ENCODE measurements at regions of chr4 and their contacts with region 1.

Region 1: DNA sequence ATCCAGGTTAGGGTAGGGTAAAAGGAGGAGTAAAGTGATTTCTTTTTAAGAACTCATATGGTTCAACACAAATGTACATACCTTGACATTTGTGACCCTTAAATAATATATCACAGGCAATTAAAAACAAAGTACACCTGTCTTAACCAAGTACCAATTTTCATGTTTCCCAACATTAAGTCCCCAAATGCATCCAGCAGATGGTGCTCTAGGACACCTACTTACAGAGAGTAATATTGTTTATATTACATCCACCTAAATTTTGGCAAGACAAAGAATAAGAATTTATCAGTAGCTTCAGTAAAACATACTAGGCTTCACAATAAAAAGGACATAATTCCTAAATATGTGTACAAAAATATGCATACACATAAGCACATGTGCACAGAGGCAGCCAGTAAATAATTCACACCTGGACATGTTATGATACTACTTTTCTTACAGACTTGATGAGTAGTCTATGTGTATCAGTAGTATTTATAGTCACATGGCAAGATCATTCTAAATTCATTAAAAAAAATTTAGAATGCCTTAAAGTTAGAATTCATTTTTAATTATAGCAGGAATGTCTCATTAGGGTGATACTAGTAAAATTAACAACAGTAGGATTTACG is 219.7 kb downstream of the DCLK2 start:
- DNase-seq: peak in 1 of 2 donors; percentile 27
- ATAC-seq: peak in 2 of 8 donors; percentile 37 to 49
- H3K4me3 ChIP-seq: no peak overlapping the region
- H3K27ac ChIP-seq: no peak overlapping the region
- H3K4me1 ChIP-seq: peaks cover 0 to 10% (median 0%) of the 10 kb centered on the region in 9 donors
- H3K27me3 ChIP-seq: no peaks in the 10 kb centered on the region
- CTCF ChIP-seq: peak; percentile 30 to 78 (median 70)

Region 2: DNA sequence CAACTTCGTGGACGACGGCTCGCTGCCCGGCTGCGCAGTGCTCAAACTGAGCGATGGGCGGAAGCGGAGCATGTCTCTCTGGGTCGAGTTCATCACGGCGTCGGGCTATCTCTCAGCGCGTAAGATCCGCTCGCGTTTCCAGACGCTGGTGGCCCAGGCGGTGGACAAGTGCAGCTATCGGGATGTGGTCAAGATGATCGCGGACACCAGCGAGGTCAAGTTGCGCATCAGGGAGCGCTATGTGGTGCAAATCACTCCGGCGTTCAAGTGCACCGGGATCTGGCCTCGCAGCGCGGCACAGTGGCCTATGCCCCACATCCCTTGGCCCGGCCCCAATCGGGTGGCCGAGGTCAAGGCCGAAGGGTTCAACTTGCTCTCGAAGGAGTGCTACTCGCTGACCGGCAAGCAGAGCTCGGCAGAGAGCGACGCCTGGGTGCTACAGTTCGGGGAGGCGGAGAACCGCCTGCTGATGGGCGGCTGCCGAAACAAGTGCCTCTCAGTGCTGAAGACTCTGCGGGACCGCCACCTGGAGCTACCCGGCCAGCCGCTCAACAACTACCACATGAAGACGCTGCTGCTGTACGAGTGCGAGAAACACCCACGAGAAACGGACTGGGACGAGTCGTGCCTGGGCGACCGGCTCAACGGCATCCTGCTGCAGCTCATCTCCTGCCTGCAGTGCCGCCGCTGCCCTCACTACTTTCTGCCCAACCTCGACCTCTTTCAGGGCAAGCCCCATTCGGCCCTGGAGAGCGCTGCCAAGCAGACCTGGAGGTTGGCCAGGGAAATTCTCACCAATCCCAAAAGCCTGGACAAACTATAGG is 285.5 kb after region 1 on chr4:
- intact Hi-C with region 1: loop called in 1 of 10 experiments (anchors 10 kb)
- DNase-seq: peak; percentile 15 to 25
- ATAC-seq: peak; percentile 31 to 87 (median 66)
- H3K4me3 ChIP-seq: peak overlapping the region; percentile 22 to 54 (median 48)
- H3K27ac ChIP-seq: no peak overlapping the region
- H3K4me1 ChIP-seq: peaks cover 0 to 10% (median 0%) of the 10 kb centered on the region in 9 donors
- H3K27me3 ChIP-seq: peaks cover 0 to 52% (median 0%) of the 10 kb centered on the region in 7 donors
- CTCF ChIP-seq: peak in 1 of 9 donors; percentile 8

Region 3: DNA sequence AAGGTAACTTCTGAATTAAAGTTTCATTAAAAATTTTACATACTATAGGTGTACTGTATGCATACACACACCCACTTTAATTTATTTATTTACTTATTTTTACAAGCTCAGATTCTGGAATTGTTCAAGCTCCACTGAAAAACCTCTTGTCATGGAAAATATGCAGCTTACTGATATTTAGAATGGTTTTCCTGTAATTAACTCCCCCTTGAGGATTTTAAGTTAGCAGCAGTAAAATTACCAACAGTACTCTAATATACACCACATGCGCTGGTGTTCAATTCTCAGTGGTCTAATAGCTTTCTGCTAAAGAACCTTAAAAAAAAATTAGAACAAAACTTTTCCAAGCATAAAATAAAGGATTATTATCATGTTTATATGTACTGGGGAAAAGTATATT is 296.0 kb after region 1 on chr4:
- intact Hi-C with region 1: loop called in 2 of 10 experiments (anchors 10 kb)
- DNase-seq: no peak
- ATAC-seq: no peak
- H3K4me3 ChIP-seq: no peak overlapping the region
- H3K27ac ChIP-seq: no peak overlapping the region
- H3K4me1 ChIP-seq: no peaks in the 10 kb centered on the region
- H3K27me3 ChIP-seq: no peaks in the 10 kb centered on the region
- CTCF ChIP-seq: peak in 4 of 9 donors; percentile 20 to 24 (median 22)

Region 4: GRCh38 chr4:150852216-150852615 is 554.2 kb after region 1 on chr4:
- intact Hi-C with region 1: loop called in 1 of 10 experiments (anchors 10 kb)
- DNase-seq: no peak
- ATAC-seq: peak in 2 of 8 donors; percentile 16 to 43
- H3K4me3 ChIP-seq: no peak overlapping the region
- H3K27ac ChIP-seq: no peak overlapping the region
- H3K4me1 ChIP-seq: peaks cover 0 to 13% (median 0%) of the 10 kb centered on the region in 9 donors
- H3K27me3 ChIP-seq: no peaks in the 10 kb centered on the region
- CTCF ChIP-seq: no peak

Region 5: GRCh38 chr4:150867148-150867547 is 569.2 kb after region 1 on chr4:
- intact Hi-C with region 1: loop called (anchors 1 to 10 kb)
- DNase-seq: peak in 1 of 2 donors; percentile 59
- ATAC-seq: peak in 7 of 8 donors; percentile 55 to 82 (median 72)
- H3K4me3 ChIP-seq: no peak overlapping the region
- H3K27ac ChIP-seq: no peak overlapping the region
- H3K4me1 ChIP-seq: peaks cover 0 to 4% (median 0%) of the 10 kb centered on the region in 9 donors
- H3K27me3 ChIP-seq: no peaks in the 10 kb centered on the region
- CTCF ChIP-seq: peak; percentile 55 to 78 (median 69)

Region 6: GRCh38 chr4:150874338-150875226 is 576.6 kb after region 1 on chr4:
- intact Hi-C with region 1: loop called in 7 of 10 experiments (anchors 2 to 10 kb)
- DNase-seq: peak; percentile 55 to 70
- ATAC-seq: peak; percentile 93 to 99 (median 98)
- H3K4me3 ChIP-seq: peak overlapping the region in 3 of 10 donors; percentile 8 to 15 (median 9)
- H3K27ac ChIP-seq: peak overlapping the region in 9 of 10 donors; percentile 10 to 80 (median 56)
- H3K4me1 ChIP-seq: peaks cover 0 to 13% (median 5%) of the 10 kb centered on the region in 9 donors
- H3K27me3 ChIP-seq: no peaks in the 10 kb centered on the region
- CTCF ChIP-seq: no peak

Region 7: GRCh38 chr4:150950657-150951288 is 652.8 kb after region 1 on chr4:
- intact Hi-C with region 1: loop called in 1 of 10 experiments (anchors 5 kb)
- DNase-seq: no peak
- ATAC-seq: peak in 5 of 8 donors; percentile 65 to 76 (median 70)
- H3K4me3 ChIP-seq: no peak overlapping the region
- H3K27ac ChIP-seq: no peak overlapping the region
- H3K4me1 ChIP-seq: peaks cover 0 to 26% (median 11%) of the 10 kb centered on the region in 9 donors
- H3K27me3 ChIP-seq: no peaks in the 10 kb centered on the region
- CTCF ChIP-seq: no peak

Measured in heart right ventricle (tissue), 16 donors.